Activated naive CD4-positive, alpha-beta T cell treated with anti-CD3 and anti-CD28 coated beads, Interleukin-2, amount 10 ng/mL, durations not matched to agents 7 days and 5 days (primary cell): ENCODE measurements at regions of chr15 and their contacts with region 1.

Region 1: DNA sequence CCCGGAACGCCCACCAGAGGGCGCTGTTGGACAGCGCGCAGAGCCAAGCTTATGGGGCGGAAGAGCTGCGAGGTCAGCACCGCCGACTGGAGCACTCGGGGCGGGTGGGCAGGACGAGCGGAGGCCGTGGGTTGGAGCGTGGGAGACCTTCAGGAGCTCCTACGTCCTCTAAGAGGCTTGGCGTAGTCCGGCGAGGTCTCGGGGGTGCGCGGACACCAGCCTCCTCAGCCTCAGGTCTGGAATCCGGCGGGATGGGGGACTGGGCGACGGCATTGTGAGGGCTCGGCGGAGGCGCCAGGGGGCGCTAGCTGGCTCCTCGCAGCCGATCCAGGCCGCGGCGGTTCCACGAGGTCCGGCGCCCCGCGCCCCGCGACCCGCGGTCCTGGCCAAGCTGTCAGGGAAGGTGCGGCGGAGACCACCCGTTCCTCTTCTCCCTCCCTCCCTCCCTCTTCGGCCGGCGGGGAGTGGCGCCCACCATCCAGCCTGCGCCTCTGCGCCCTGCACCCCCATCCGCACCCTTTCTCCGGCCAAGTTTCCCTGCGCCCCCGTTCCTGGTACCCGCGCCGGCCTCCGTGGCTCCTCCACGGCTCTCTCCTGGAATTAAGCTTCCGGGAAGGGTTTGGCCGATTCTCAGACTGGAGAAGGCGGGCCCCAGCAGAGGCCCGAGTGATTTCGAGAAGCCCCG is 24.3 kb upstream of the POLG start:
- DNase-seq: peak; percentile 85
- H3K4me3 Mint-ChIP-seq: peak overlapping the region; percentile 76
- H3K27ac Mint-ChIP-seq: no peak overlapping the region
- H3K4me1 Mint-ChIP-seq: peaks cover 5% of the 10 kb centered on the region
- H3K27me3 Mint-ChIP-seq: peaks cover 100% of the 10 kb centered on the region

Region 2: GRCh38 chr15:89143503-89144162 is 215.3 kb before region 1 on chr15:
- CTCF ChIA-PET with region 1: no interaction called
- DNase-seq: no peak
- H3K4me3 Mint-ChIP-seq: no peak overlapping the region
- H3K27ac Mint-ChIP-seq: no peak overlapping the region
- H3K4me1 Mint-ChIP-seq: peaks cover 24% of the 10 kb centered on the region
- H3K27me3 Mint-ChIP-seq: no peaks in the 10 kb centered on the region

Region 3: GRCh38 chr15:89371228-89372079 is 12.6 kb after region 1 on chr15:
- CTCF ChIA-PET with region 1: interaction called, 47 read pairs
- DNase-seq: no peak
- H3K4me3 Mint-ChIP-seq: no peak overlapping the region
- H3K27ac Mint-ChIP-seq: no peak overlapping the region
- H3K4me1 Mint-ChIP-seq: peaks cover 9% of the 10 kb centered on the region
- H3K27me3 Mint-ChIP-seq: peaks cover 99% of the 10 kb centered on the region

Region 4: GRCh38 chr15:89383365-89384175 is 24.7 kb after region 1 on chr15:
- CTCF ChIA-PET with region 1: interaction called, 47 read pairs
- DNase-seq: no peak
- H3K4me3 Mint-ChIP-seq: no peak overlapping the region
- H3K27ac Mint-ChIP-seq: no peak overlapping the region
- H3K4me1 Mint-ChIP-seq: no peaks in the 10 kb centered on the region
- H3K27me3 Mint-ChIP-seq: peaks cover 67% of the 10 kb centered on the region

Region 5: DNA sequence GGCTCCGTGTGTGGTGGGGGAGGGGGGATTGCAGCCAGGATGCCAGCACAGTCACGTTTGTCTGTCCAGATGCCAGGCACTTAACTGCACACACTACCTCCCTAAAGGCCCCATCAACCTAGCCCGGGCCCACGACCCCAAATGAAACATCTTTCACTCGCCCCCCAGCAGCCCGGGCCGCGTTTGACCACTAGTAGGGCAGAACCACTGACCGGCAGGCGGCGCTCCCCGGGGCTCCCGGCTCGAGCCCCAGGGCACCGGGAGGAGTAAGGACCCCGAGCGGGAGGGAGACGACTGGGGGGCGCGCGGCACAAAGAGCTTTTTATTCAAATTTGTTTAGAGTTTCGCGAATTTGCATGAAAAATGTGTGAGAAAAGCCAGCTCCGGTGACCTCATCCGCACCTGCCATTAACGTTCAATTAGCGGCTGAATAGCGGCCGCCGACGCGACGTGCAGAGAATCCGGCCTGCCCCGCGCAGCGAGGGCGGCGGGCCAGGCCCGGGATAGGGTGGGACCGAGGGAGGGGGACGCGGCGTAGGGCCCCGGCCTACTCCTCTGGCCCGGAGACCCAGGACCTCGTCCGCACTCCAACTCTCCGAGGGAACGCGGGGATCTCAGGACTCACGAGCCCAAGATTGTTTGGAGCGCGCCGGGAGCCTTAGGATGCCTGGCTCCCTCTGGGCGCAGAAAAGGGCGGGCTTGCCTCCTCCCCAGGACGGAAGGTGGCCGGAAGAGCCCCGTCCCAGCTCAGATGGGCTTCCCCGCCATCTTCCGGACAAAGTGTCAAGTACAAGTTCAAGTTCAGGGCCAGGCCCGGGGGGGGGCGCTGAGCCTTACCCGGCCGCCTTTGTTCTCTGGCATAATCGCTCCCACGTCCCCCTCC is 40.6 kb after region 1 on chr15:
- CTCF ChIA-PET with region 1: interaction called, 51 read pairs
- DNase-seq: peak; percentile 49
- H3K4me3 Mint-ChIP-seq: peak overlapping the region; percentile 67
- H3K27ac Mint-ChIP-seq: no peak overlapping the region
- H3K4me1 Mint-ChIP-seq: peaks cover 22% of the 10 kb centered on the region
- H3K27me3 Mint-ChIP-seq: peaks cover 92% of the 10 kb centered on the region

Region 6: GRCh38 chr15:89430530-89431341 is 71.8 kb after region 1 on chr15:
- CTCF ChIA-PET with region 1: interaction called, 71 read pairs
- DNase-seq: peak; percentile 88
- H3K4me3 Mint-ChIP-seq: peak overlapping the region; percentile 67
- H3K27ac Mint-ChIP-seq: no peak overlapping the region
- H3K4me1 Mint-ChIP-seq: peaks cover 4% of the 10 kb centered on the region
- H3K27me3 Mint-ChIP-seq: peaks cover 74% of the 10 kb centered on the region

Region 7: DNA sequence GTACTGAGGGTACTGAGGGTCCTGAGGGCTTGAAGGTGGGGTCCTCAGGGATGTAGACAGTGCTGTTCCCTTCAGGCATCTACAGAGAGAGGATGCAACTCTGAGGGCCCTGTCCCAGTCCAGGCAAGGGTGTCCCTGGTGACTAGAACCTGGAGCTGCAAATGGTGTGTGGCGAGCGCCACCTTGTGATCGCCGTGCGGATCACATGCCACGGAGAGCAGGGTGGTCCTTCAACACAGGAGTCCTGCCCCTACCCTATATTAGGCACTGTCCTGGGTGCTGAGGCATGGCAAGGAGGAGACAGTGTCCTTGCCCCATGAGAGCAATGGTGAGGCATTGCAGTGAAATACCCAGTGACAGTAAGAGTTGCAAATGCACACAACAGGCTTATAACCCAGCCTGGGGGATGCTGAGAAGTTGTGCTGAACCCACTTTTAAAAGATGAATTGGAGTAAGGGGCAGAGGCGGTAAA is 113.9 kb after region 1 on chr15:
- CTCF ChIA-PET with region 1: interaction called, 40 read pairs
- DNase-seq: peak; percentile 64
- H3K4me3 Mint-ChIP-seq: no peak overlapping the region
- H3K27ac Mint-ChIP-seq: no peak overlapping the region
- H3K4me1 Mint-ChIP-seq: no peaks in the 10 kb centered on the region
- H3K27me3 Mint-ChIP-seq: peaks cover 53% of the 10 kb centered on the region